Activated CD4-positive, alpha-beta T cell treated with anti-CD3 and anti-CD28 coated beads for 36 hours (primary cell): ENCODE measurements at regions of chr3 and their contacts with region 1.

Region 1: GRCh38 chr3:95905182-95905581 is 909.2 kb upstream of the EPHA6 start:
- DNase-seq: no peak
- ATAC-seq: no peak
- H3K4me3 Mint-ChIP-seq: no peak overlapping the region
- H3K27ac Mint-ChIP-seq: no peak overlapping the region
- H3K4me1 Mint-ChIP-seq: no peaks in the 10 kb centered on the region
- H3K27me3 Mint-ChIP-seq: no peaks in the 10 kb centered on the region

Region 2: DNA sequence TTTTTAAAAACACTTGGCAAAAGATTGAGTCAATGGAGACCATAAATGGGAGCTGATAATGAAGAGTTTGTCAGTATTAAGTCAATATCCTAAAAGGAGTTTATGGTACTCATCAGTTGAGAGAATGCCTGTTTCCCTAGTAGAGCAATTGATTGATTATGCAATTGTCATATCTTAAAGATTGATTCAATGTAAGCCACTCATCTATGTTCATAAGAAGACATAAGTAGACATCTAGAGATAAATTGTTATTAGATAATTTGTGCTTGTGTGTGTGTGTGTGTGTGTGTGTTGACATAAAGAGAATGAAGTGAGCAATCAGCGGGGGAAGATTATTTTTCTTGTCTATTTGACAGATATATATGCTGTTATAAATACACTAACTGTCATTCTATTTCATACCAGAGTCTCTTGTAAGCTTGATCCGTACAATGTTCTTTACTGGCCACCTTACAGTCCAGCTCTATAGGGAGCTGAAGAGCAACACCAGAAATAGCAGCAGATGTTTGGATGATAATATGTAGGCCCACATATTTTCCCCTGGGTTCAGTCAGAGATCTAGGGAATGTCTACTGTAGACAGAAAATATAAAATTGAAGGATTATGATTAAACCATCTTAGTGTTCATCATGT is 60.6 kb after region 1 on chr3:
- CTCF ChIA-PET with region 1: no interaction called
- POLR2A ChIA-PET with region 1: no interaction called
- intact Hi-C with region 1: loop called in 1 of 2 experiments (anchors 2 kb)
- DNase-seq: no peak
- ATAC-seq: no peak
- H3K4me3 Mint-ChIP-seq: no peak overlapping the region
- H3K27ac Mint-ChIP-seq: no peak overlapping the region
- H3K4me1 Mint-ChIP-seq: no peaks in the 10 kb centered on the region
- H3K27me3 Mint-ChIP-seq: no peaks in the 10 kb centered on the region